ENCODE measurements at regions of chr12 and their contacts with region 1.

Region 1: DNA sequence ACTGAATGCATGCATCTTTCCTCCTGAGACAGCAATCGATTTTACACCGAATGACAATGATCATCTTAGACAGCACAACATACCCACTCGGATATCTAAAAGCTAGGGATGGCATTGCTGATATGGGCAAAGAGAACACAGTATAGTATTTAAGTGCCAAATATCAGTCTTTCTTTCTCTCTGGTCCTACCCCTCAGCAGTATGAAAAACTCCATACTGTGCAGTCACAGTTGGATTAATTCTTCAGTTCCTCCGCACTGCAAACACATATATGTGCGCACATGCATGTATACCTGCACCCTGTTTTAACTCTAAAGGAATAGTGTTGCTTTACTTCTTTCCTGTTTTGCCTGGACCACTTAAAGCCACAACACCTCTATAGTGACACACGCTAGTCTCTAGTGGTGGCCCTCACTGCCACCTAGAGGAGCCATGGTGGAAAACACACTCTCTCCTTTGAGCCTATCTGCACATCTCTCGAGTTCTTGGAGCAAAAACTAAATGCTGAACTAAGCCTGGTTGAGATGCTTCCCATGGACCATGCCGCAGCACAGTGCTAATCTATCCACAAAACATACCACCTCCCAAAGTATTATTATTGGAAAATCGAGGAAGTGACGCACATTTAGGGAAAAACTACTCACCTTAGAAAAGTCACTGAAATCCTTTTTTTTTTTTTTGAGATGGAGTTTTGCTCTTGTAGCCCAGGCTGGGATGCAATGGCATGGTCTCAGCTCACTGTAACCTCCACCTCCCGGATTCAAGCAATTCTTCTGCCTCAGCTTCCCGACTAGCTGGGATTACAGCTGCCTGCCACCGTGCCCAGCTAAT is 11.9 kb downstream of the TMEM52B start:
- DNase-seq: peak; percentile 80
- H3K4me3 Mint-ChIP-seq: no peak overlapping the region
- H3K27ac Mint-ChIP-seq: no peak overlapping the region
- H3K4me1 Mint-ChIP-seq: peaks cover 19% of the 10 kb centered on the region
- H3K27me3 Mint-ChIP-seq: no peaks in the 10 kb centered on the region
- CTCF ChIP-seq: peak; percentile 73

Region 2: DNA sequence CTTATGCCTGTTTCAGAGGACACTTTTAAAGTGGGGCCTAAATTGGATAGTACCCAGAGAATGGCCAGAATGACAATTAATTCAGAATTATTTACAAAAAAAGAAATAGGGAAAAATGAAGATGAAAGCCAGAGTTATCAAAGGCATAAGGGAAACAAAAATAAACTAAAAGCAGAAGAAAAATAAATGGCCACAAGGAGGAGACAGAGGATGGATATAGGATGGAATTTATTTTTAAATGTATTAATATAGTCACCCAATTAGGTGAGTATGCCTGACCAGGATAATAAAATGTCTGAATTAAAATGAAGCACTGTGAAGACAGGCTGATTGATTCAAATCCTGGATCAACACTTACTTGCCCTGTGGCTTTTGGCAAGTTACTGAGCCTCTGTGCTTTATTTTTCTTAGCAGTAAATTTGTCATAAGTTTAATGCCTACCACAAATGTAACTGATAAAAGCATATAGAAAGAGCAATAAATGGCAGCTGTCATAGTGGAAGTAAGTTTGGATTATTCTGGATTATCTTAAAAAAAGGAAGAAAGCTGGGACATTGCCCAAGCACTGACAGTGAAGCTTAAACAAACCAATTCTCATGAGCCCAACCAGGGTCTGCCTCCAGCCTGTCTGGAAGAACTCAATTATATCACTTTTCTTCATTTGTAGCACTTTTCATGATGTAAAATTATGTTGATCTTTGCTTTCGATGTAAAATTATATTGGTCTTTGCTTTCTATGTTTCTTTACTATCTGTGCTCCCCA is 156.8 kb before region 1 on chr12:
- CTCF ChIA-PET with region 1: interaction called, 15 read pairs
- POLR2A ChIA-PET with region 1: interaction called, 3 read pairs
- intact Hi-C with region 1: no loop called
- DNase-seq: peak; percentile 48
- H3K4me3 Mint-ChIP-seq: no peak overlapping the region
- H3K27ac Mint-ChIP-seq: no peak overlapping the region
- H3K4me1 Mint-ChIP-seq: peaks cover 23% of the 10 kb centered on the region
- H3K27me3 Mint-ChIP-seq: no peaks in the 10 kb centered on the region
- CTCF ChIP-seq: peak; percentile 70

Region 3: GRCh38 chr12:10175846-10176636 is 14.7 kb before region 1 on chr12:
- CTCF ChIA-PET with region 1: interaction called, 20 read pairs
- POLR2A ChIA-PET with region 1: interaction called, 14 read pairs
- intact Hi-C with region 1: no loop called
- DNase-seq: peak; percentile 60
- H3K4me3 Mint-ChIP-seq: no peak overlapping the region
- H3K27ac Mint-ChIP-seq: no peak overlapping the region
- H3K4me1 Mint-ChIP-seq: peaks cover 19% of the 10 kb centered on the region
- H3K27me3 Mint-ChIP-seq: no peaks in the 10 kb centered on the region
- CTCF ChIP-seq: no peak

Region 4: GRCh38 chr12:10243818-10244520 is 53.2 kb after region 1 on chr12:
- CTCF ChIA-PET with region 1: no interaction called
- POLR2A ChIA-PET with region 1: no interaction called
- intact Hi-C with region 1: no loop called
- DNase-seq: no peak
- H3K4me3 Mint-ChIP-seq: no peak overlapping the region
- H3K27ac Mint-ChIP-seq: no peak overlapping the region
- H3K4me1 Mint-ChIP-seq: peaks cover 17% of the 10 kb centered on the region
- H3K27me3 Mint-ChIP-seq: no peaks in the 10 kb centered on the region
- CTCF ChIP-seq: no peak

Region 5: GRCh38 chr12:10354502-10354901 is 163.7 kb after region 1 on chr12:
- CTCF ChIA-PET with region 1: no interaction called
- POLR2A ChIA-PET with region 1: no interaction called
- intact Hi-C with region 1: no loop called
- DNase-seq: peak; percentile 63
- H3K4me3 Mint-ChIP-seq: no peak overlapping the region
- H3K27ac Mint-ChIP-seq: no peak overlapping the region
- H3K4me1 Mint-ChIP-seq: no peaks in the 10 kb centered on the region
- H3K27me3 Mint-ChIP-seq: no peaks in the 10 kb centered on the region
- CTCF ChIP-seq: no peak

Measured in MCF 10A (cell line).